ENCODE measurements at regions of chr11 and their contacts with region 1.

Region 1: DNA sequence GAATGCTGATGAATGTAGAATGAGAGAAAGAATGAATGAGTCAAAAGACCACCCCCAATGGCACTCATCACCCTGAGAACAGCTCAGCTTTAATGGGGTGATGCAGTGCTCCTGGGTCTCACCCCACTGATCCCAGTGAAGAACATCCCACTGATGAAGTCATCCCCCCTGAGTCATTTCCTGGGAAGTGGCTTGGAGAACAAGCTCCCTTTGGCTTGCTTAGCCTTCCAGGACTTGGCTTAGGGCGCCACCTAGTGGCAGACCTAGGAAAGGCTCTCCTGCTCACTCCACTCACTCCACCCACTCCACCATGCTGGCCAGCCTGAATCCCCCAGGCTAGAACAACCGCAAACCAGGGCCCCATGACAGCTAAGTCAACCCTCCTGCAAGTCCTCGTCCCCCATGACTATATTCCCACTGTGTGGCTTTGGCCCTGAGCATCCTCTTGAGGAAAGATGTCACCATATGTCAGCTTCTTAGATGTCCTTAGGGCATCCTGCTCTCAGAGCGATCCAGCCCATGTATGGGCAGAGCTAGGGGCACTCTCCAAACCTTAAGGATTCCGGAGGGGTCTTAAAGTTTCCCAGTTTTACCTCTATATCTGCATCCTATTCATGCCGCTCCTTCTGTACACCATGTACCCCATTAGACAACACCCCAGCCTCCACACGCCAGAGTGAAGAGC is 17.8 kb upstream of the TMPRSS13 start:
- DNase-seq: peak; percentile 85
- H3K4me3 Mint-ChIP-seq: no peak overlapping the region
- H3K27ac Mint-ChIP-seq: peak overlapping the region; percentile 43
- H3K4me1 Mint-ChIP-seq: peaks cover 84% of the 10 kb centered on the region
- H3K27me3 Mint-ChIP-seq: no peaks in the 10 kb centered on the region

Region 2: GRCh38 chr11:117426269-117426685 is 520.7 kb before region 1 on chr11:
- CTCF ChIA-PET with region 1: interaction called, 13 read pairs
- POLR2A ChIA-PET with region 1: no interaction called
- DNase-seq: peak; percentile 68
- H3K4me3 Mint-ChIP-seq: no peak overlapping the region
- H3K27ac Mint-ChIP-seq: no peak overlapping the region
- H3K4me1 Mint-ChIP-seq: peaks cover 2% of the 10 kb centered on the region
- H3K27me3 Mint-ChIP-seq: peaks cover 9% of the 10 kb centered on the region

Region 3: DNA sequence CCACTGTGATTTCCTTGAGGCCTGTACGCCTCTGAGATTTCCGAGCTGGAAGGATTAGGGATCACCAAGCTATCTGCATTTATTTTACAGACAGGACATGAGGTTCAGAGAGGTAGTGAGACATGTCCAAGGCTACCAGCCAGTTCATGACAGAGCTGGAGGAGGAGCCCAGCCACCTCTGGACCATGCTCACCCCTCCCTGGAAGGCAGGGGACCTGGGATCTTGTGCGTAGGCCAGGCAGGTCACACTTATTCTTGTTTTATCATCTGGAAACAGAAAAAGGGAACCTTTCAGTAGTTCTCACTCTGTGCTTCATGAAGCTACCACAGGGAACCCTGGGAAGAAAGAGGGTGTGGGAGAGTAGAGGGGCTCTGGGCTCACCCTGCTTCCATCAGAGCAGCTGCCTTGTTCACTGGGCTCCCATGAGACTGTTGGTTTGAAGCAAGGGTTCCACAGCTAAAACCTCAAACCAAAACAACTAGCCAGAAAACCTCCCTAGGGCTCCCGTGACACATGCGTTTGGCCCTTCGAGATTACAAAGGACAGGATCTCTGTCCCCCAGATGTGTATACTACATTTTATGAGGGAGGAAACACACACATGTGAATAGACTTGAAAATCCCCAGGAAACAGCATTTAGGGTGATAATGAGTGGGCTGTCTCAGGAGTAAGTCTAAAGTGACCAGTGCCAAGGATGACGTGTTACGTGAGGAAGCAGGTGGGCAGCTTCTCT is 256.3 kb before region 1 on chr11:
- CTCF ChIA-PET with region 1: no interaction called
- POLR2A ChIA-PET with region 1: no interaction called
- DNase-seq: no peak
- H3K4me3 Mint-ChIP-seq: no peak overlapping the region
- H3K27ac Mint-ChIP-seq: no peak overlapping the region
- H3K4me1 Mint-ChIP-seq: no peaks in the 10 kb centered on the region
- H3K27me3 Mint-ChIP-seq: peaks cover 15% of the 10 kb centered on the region

Region 4: DNA sequence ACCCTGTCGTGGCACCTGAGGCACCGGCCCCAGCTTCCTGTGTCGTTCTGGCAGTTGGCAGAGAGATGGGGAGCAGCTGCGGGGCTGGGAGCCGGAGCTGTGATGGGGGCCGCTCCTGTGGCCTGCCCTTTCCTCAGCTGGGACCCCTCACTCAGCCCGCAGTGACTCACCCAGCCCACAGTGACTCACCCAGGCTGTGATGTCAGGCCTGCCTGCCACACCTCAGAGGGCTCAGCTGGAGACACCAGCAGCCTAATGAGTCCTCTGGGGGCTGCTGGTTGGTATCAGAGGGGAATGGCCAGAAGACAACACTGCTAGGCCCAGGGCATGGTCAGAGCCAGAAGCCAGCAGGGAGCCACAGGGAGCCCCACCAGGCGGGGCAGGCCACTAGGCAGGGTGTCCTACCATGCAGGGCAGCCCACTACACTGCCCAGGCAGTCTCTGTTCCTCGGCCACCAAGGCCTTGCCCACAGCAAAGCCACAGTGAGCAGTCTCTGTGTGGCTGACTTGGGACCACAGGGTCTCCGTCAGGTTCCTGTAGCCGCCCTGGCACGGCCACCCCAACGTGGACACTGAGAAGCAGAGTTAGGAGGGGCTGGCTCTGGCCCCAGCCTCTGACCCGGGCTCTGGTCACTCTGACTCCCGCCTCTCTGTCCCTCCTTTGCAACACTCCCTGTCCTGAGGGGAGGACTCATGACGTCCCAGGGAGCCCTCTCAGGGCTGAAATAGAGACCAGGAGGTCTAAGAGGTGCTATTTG is 118.2 kb before region 1 on chr11:
- CTCF ChIA-PET with region 1: interaction called, 46 read pairs
- POLR2A ChIA-PET with region 1: interaction called, 7 read pairs
- DNase-seq: peak; percentile 85
- H3K4me3 Mint-ChIP-seq: no peak overlapping the region
- H3K27ac Mint-ChIP-seq: peak overlapping the region; percentile 74
- H3K4me1 Mint-ChIP-seq: peaks cover 53% of the 10 kb centered on the region
- H3K27me3 Mint-ChIP-seq: no peaks in the 10 kb centered on the region

Region 5: DNA sequence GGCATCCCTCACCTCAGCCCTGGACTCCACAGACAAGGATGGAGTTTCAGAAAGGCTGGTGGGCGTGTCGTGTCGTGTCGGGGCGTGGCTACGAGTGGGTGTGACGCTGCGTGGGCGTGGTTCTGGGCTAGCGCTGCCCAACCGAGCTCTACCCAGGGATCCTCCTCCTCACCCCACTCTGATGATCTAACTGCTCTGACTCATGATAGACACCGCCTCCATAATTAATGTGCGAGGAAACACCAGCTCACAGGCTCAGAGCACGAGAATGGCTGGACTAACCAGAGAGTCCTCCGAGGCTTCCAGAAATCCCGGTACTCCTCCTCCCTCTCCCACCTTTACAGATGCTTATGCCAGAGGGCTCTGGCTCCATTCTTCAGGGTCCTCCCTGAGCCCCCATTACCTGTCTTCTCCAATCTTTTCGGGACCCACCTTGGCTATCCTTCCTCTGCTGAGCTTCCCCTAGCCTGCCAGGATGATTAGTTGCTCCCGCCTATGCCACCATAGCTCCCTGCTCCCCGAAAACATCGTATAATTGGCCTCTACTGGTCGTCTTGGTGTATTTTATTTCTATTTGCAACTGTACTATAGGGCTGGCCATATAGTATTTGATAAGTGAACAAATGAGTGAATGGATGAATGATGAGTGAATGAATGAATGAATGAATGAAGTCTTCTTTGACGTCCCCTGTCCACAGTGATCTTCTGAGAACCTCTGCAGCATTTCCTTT is 39.6 kb before region 1 on chr11:
- CTCF ChIA-PET with region 1: interaction called, 19 read pairs
- POLR2A ChIA-PET with region 1: interaction called, 4 read pairs
- DNase-seq: peak; percentile 82
- H3K4me3 Mint-ChIP-seq: peak overlapping the region; percentile 48
- H3K27ac Mint-ChIP-seq: peak overlapping the region; percentile 50
- H3K4me1 Mint-ChIP-seq: peaks cover 12% of the 10 kb centered on the region
- H3K27me3 Mint-ChIP-seq: peaks cover under 1% of the 10 kb centered on the region

Region 6: GRCh38 chr11:117959438-117960149 is 12.6 kb after region 1 on chr11:
- CTCF ChIA-PET with region 1: interaction called, 14 read pairs
- POLR2A ChIA-PET with region 1: interaction called, 7 read pairs
- DNase-seq: no peak
- H3K4me3 Mint-ChIP-seq: peak overlapping the region; percentile 36
- H3K27ac Mint-ChIP-seq: peak overlapping the region; percentile 82
- H3K4me1 Mint-ChIP-seq: peaks cover 38% of the 10 kb centered on the region
- H3K27me3 Mint-ChIP-seq: no peaks in the 10 kb centered on the region

Region 7: GRCh38 chr11:117985953-117986887 is 39.2 kb after region 1 on chr11 and contains the start of gene IL10RA:
- CTCF ChIA-PET with region 1: interaction called, 170 read pairs
- POLR2A ChIA-PET with region 1: interaction called, 878 read pairs
- DNase-seq: peak; percentile 90
- H3K4me3 Mint-ChIP-seq: peak within 1 kb of the TSS; percentile 89
- H3K27ac Mint-ChIP-seq: peak within 1 kb of the TSS; percentile 85
- H3K4me1 Mint-ChIP-seq: peaks cover 61% of the 10 kb centered on the region
- H3K27me3 Mint-ChIP-seq: no peaks in the 10 kb centered on the region
- total RNA-seq, gene IL10RA: 286 to 291 TPM

Region 8: GRCh38 chr11:118051611-118052461 is 104.9 kb after region 1 on chr11:
- CTCF ChIA-PET with region 1: interaction called, 333 read pairs
- POLR2A ChIA-PET with region 1: interaction called, 122 read pairs
- DNase-seq: peak; percentile 81
- H3K4me3 Mint-ChIP-seq: peak overlapping the region; percentile 45
- H3K27ac Mint-ChIP-seq: peak overlapping the region; percentile 95
- H3K4me1 Mint-ChIP-seq: peaks cover 62% of the 10 kb centered on the region
- H3K27me3 Mint-ChIP-seq: peaks cover 4% of the 10 kb centered on the region

Region 9: GRCh38 chr11:118198370-118198769 is 251.4 kb after region 1 on chr11:
- CTCF ChIA-PET with region 1: no interaction called
- POLR2A ChIA-PET with region 1: no interaction called
- DNase-seq: peak; percentile 85
- H3K4me3 Mint-ChIP-seq: no peak overlapping the region
- H3K27ac Mint-ChIP-seq: peak overlapping the region; percentile 63
- H3K4me1 Mint-ChIP-seq: peaks cover 15% of the 10 kb centered on the region
- H3K27me3 Mint-ChIP-seq: no peaks in the 10 kb centered on the region